Activated CD4-positive, alpha-beta T cell treated with anti-CD3 and anti-CD28 coated beads for 36 hours (primary cell): ENCODE measurements at regions of chr1 and their contacts with region 1.

Region 1: DNA sequence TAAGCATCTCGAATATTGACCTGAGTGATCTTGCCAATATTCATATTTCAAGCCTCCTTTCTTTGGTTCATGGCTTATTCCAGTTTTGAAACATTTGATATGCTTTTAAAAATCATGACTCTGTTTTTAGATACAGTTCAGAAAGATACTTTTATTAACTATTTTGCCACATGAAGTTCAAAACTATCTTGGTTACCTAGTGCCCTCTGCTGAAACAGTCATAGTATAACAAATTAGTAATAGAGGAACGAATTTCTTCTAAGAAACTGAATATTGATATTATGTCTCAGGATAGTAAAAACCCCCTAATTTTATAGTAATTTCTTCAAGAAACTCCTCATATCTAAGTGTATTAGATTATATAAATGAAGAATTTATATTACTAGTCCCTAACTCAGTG is 52.6 kb upstream of the RC3H1 start:
- DNase-seq: no peak
- ATAC-seq: no peak
- H3K4me3 Mint-ChIP-seq: no peak overlapping the region
- H3K27ac Mint-ChIP-seq: no peak overlapping the region
- H3K4me1 Mint-ChIP-seq: no peaks in the 10 kb centered on the region
- H3K27me3 Mint-ChIP-seq: peaks cover 1% of the 10 kb centered on the region

Region 2: GRCh38 chr1:173420330-173420806 is 654.4 kb before region 1 on chr1:
- CTCF ChIA-PET with region 1: no interaction called
- POLR2A ChIA-PET with region 1: no interaction called
- intact Hi-C with region 1: loop called in 1 of 2 experiments (anchors 5 kb)
- DNase-seq: peak; percentile 69
- ATAC-seq: peak; percentile 91
- H3K4me3 Mint-ChIP-seq: no peak overlapping the region
- H3K27ac Mint-ChIP-seq: no peak overlapping the region
- H3K4me1 Mint-ChIP-seq: peaks cover 3% of the 10 kb centered on the region
- H3K27me3 Mint-ChIP-seq: no peaks in the 10 kb centered on the region

Region 3: GRCh38 chr1:173903827-173904531 is 170.8 kb before region 1 on chr1:
- CTCF ChIA-PET with region 1: no interaction called
- POLR2A ChIA-PET with region 1: no interaction called
- intact Hi-C with region 1: loop called in 1 of 2 experiments (anchors 5 kb)
- DNase-seq: no peak
- ATAC-seq: no peak
- H3K4me3 Mint-ChIP-seq: no peak overlapping the region
- H3K27ac Mint-ChIP-seq: no peak overlapping the region
- H3K4me1 Mint-ChIP-seq: peaks cover 13% of the 10 kb centered on the region
- H3K27me3 Mint-ChIP-seq: no peaks in the 10 kb centered on the region

Region 4: GRCh38 chr1:174032671-174033222 is 42.0 kb before region 1 on chr1:
- CTCF ChIA-PET with region 1: no interaction called
- POLR2A ChIA-PET with region 1: no interaction called
- intact Hi-C with region 1: no loop called
- DNase-seq: no peak
- ATAC-seq: no peak
- H3K4me3 Mint-ChIP-seq: no peak overlapping the region
- H3K27ac Mint-ChIP-seq: no peak overlapping the region
- H3K4me1 Mint-ChIP-seq: no peaks in the 10 kb centered on the region
- H3K27me3 Mint-ChIP-seq: peaks cover 2% of the 10 kb centered on the region